RWPE1 (cell line): ENCODE measurements at regions of chr14 and their contacts with region 1.

Region 1: DNA sequence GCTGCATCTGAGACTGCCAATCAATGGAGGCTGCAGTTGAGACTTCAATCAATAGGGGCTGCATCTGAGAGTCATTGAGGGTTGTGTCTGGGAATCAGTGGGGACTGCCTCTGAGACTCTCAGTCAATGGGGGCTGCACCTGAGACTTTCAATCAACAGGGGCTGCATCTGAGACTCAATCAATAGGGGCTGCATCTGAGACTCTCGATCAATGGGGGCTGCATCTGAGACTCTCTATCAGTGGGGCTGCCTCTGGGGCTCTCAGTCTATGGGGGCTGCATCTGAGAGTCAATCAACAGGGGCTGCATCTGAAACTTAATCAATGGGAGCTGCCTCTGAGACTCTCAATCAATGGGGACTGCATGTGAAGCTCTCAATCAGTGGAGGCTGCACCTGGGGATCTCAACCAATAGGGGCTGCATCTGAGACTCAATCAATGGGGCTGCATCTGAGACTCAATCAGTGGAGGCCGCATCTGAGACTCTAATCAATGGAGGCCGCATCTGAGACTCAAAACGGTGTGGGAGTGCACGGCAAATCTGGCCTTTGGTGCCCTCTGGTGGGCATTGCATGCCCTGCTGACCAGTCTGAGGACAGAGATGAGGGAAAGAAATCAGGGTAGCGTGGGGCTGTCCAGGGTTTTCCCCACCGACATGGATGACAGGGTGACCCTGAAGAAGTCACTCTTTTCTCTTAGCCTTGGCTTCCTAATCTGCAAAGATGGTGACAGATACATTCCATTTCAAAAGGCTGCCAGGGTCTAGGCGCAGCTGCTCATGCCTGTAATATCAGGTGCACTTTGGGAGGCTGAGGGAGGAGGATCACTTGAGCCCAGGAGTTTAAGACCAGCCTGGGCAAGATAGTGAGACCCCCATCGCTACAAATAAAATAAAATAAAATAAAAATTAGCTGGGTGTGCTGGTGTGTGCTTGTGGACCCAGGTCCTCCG is 41.3 kb upstream of the EIF5 start:
- DNase-seq: peak; percentile 76
- H3K27ac ChIP-seq: no peak overlapping the region
- CTCF ChIP-seq: peak; percentile 91

Region 2: GRCh38 chr14:103074699-103075355 is 217.9 kb before region 1 on chr14:
- CTCF ChIA-PET with region 1: interaction called, 14 read pairs
- POLR2A ChIA-PET with region 1: no interaction called
- DNase-seq: no peak
- H3K27ac ChIP-seq: peak overlapping the region; percentile 99
- CTCF ChIP-seq: no peak

Region 3: GRCh38 chr14:103123634-103124500 is 168.8 kb before region 1 on chr14:
- CTCF ChIA-PET with region 1: interaction called, 12 read pairs
- POLR2A ChIA-PET with region 1: no interaction called
- DNase-seq: no peak
- H3K27ac ChIP-seq: peak overlapping the region; percentile 89
- CTCF ChIP-seq: peak; percentile 32; the same call in 1 of the 2 replicates